Activated naive CD4-positive, alpha-beta T cell treated with anti-CD3 and anti-CD28 coated beads for 36 hours (primary cell): ENCODE measurements at regions of chr1 and their contacts with region 1.

Region 1: DNA sequence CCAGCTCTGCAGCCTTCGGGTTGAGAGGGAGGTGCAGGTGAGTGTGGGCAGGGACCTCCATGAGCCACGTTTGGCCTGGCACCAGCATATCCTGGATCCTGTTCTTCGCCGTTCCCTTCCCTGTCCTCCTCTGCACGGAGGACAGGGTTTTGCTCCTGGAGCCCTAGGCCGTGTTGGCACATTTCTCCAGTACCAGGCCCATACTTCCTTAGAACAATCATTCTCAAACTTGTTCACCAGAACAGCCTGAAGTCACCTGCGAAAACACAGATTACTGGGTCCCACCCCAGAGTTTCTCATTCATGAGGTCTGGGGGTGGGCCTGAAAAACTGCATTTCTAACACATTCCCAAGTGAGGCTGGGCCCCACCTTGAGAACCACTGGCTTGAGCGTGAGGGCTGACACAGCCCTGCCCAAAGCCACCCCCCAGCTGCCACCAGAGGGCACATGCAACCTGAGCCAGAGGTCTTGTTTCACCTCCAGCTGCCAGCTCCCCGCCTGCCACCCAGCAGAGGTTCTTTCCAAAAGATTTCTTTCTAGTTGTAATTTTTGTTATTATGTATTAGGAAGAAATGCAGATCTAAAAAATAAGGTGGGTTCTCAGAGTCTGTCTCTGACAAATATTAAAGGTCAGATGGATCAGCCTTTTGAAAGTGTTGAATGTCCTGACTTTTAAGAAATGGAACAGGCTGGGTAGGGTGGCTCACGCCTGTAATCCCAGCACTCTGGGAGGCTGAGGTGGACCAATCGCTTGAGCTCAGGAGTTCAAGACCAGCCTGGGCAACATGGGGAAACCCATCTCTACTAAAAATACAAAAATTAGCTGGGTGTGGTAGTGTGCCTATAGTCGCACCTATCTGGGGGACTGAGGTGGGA is 39.6 kb upstream of the LDLRAP1 start:
- DNase-seq: peak; percentile 86
- H3K4me3 Mint-ChIP-seq: no peak overlapping the region
- H3K27ac Mint-ChIP-seq: peak overlapping the region; percentile 65
- H3K4me1 Mint-ChIP-seq: peaks cover 40% of the 10 kb centered on the region
- H3K27me3 Mint-ChIP-seq: no peaks in the 10 kb centered on the region

Region 2: DNA sequence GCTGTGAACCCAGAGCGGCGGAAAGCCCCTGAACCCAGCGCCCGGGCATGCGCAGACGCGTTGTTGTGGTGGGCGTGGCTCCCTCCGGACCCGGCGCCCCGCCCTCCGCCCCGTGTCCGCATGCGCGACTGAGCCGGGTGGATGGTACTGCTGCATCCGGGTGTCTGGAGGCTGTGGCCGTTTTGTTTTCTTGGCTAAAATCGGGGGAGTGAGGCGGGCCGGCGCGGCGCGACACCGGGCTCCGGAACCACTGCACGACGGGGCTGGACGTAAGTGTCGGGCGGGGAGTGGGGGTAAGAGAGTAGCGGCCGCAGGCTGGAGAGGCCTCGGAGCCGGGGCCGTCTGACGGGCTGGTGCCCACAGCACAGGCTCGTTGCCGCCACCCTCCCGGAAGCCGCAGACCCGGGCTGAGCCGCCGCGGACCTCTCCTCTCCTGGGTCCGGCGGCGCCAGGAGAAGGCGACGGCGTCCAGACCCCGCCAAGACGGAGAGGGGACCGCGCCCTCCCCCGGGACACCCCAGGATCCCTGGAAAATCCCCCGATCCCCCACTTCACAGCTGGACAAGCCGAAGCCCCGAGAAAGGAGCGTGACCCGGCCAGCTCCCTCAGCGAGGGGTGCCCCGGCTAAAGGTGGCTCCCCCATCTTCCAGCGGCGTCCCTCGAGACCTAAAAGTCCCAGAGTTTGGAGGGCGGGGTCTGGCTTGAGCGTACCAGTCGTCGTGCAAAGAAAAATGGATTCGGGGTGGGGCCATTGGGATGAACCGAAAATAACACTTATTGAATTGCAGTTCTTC is 165.4 kb before region 1 on chr1 and contains the start of gene TMEM50A:
- CTCF ChIA-PET with region 1: no interaction called
- intact Hi-C with region 1: no loop called
- DNase-seq: peak; percentile 91
- H3K4me3 Mint-ChIP-seq: peak within 1 kb of the TSS; percentile 93
- H3K27ac Mint-ChIP-seq: peak within 1 kb of the TSS; percentile 93
- H3K4me1 Mint-ChIP-seq: peaks cover 28% of the 10 kb centered on the region
- H3K27me3 Mint-ChIP-seq: no peaks in the 10 kb centered on the region
- total RNA-seq, gene TMEM50A: 96.2 to 98.3 TPM

Region 3: GRCh38 chr1:25442178-25442577 is 61.6 kb before region 1 on chr1:
- CTCF ChIA-PET with region 1: no interaction called
- intact Hi-C with region 1: no loop called
- DNase-seq: no peak
- H3K4me3 Mint-ChIP-seq: no peak overlapping the region
- H3K27ac Mint-ChIP-seq: no peak overlapping the region
- H3K4me1 Mint-ChIP-seq: peaks cover 40% of the 10 kb centered on the region
- H3K27me3 Mint-ChIP-seq: no peaks in the 10 kb centered on the region

Region 4: DNA sequence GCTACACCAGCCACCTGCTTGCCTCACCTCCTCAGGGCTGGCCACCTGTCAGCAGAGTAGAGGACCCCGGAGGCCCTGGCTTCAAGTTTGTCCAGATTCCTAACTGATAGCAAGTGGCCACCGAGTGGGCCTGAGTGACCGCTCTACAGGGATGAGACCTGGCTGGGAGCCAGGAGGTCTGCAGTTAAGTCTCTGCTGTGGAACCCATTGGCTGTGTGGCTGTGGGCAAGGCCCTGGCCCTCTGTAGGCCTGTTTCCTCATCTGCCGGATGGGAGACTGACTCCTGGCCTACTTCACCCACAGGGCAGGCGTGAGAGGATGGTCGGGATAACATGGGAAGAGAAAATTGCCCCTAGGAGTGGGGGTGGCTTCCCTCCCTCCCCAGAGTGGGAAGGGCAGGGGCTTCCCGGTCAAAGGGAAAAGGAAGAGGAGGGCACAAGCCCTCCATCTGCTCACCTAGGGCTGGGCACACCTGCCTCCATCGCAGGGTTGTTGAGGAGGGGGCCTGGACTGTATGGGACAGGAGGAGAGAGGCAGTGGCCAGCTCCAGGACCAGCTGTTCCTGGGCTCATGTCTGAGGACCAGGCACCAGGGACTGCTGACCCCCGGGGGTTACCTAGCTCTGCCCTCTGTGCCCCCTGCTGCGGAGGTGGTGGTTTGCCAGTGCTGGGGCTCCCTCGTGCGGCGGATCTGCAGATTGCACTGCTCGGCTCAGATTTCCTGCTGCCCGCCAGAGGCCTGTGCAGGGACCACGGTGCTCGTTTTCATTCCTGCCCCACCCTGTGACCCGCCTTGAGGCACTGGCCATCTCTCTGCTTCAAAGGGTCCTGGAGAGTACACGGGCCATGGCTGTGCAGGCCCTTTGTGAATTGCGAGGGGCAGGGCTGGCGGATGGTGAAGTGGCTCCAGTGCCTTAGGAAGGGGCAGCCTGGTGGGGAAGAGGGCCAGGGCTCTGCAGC is 306.8 kb after region 1 on chr1:
- CTCF ChIA-PET with region 1: interaction called, 5 read pairs
- intact Hi-C with region 1: loop called (anchors 2 kb)
- DNase-seq: peak; percentile 87
- H3K4me3 Mint-ChIP-seq: no peak overlapping the region
- H3K27ac Mint-ChIP-seq: no peak overlapping the region
- H3K4me1 Mint-ChIP-seq: peaks cover 5% of the 10 kb centered on the region
- H3K27me3 Mint-ChIP-seq: no peaks in the 10 kb centered on the region

Region 5: DNA sequence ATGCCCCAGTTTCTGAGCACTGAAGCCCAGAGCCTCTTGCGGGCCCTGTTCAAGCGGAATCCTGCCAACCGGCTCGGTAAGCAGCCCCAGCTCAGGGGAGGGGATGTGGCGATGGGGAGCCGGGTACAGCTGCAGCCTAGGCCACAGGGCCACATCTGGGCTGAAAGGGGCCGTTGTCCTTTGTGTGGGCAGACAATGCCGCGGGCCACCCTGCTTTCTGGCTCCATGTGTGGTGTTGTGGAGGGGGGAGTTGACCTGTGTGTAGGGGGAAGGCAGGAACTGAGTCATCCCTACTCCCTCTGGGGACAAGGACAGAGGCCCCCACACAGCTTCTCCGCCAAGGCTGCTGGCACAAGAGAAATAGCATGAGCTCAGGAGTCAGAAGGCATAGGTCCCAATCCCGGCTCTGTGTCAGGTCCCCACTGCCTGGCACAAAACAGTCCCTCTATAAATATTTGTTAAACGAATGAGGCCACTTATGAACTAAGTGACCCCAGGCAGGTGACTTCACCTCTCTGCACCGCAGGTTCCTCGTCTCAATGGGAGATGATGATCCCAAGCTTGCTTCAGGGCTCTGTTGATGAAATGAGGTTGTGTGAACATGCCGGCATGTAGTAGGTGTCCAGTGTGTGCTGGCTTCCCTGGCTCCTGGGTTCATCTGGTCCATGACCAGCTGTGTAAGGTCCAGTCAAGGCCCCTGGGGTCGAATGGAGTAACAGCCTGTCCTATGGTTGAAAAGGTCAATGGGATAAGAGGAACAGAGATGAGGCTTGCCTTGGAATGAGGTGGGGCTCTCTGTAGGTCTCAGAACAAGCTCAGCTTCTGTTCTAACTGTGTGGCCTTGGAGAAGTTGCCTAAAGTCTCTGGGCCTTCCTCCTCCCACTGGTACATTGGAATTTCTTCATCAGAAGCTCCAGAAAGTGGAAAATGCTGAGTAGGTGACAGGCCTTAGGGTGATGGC is 1052.0 kb after region 1 on chr1:
- CTCF ChIA-PET with region 1: no interaction called
- intact Hi-C with region 1: no loop called
- DNase-seq: no peak
- H3K4me3 Mint-ChIP-seq: no peak overlapping the region
- H3K27ac Mint-ChIP-seq: peak overlapping the region; percentile 53
- H3K4me1 Mint-ChIP-seq: no peaks in the 10 kb centered on the region
- H3K27me3 Mint-ChIP-seq: no peaks in the 10 kb centered on the region